ENCODE measurements at regions of chr16 and their contacts with region 1.

Region 1: DNA sequence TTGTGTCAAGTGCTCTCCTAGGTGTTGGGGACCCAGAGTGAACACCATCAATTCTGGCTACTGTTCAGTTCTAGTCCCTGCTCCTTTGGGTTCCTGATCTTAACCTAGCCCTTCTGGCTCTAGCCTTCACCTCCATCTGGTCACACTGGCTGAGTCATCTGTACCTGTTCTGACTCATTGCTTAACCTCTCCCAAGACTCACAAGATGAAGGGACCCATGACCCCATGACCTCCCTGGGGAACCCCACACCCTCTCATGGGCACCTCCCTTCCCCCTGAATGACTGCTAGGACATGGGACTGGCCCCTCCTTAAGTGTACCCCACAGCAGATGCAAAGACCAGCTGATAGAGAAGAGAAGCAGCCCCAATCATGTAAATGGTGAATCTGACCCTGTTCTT is 345.8 kb upstream of the CDH5 start:
- DNase-seq: no peak
- ATAC-seq: no peak
- H3K4me3 ChIP-seq: no peak overlapping the region
- H3K27ac ChIP-seq: no peak overlapping the region
- H3K4me1 ChIP-seq: no peaks in the 10 kb centered on the region
- H3K27me3 ChIP-seq: no peaks in the 10 kb centered on the region

Region 2: DNA sequence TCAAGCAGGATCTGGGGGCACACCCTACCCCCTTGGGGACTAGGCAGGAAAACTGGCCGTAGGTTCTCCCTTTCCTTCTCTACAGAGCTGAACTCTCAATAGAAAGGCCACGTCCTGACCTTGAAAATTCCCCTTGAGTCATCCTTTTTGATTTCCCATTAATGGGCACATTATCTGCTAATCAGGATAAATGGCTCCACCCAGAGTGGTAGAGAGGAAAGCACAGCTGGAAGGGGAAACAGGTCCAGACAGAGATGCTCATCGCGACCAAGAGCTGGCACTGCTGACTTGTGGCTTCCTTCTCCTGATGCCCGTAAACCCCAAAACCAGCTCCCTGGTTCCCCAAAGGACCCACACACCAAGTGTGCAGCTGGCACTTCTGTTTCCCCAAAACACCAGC is 139.3 kb after region 1 on chr16:
- intact Hi-C with region 1: loop called in 1 of 4 experiments (anchors 5 kb)
- DNase-seq: no peak
- ATAC-seq: no peak
- H3K4me3 ChIP-seq: no peak overlapping the region
- H3K27ac ChIP-seq: no peak overlapping the region
- H3K4me1 ChIP-seq: no peaks in the 10 kb centered on the region
- H3K27me3 ChIP-seq: no peaks in the 10 kb centered on the region